ENCODE measurements at regions of chr3 and their contacts with region 1.

Region 1: GRCh38 chr3:132416807-132417694 is at the start of gene DNAJC13:
- DNase-seq: peak; percentile 90
- H3K4me3 Mint-ChIP-seq: peak within 1 kb of the TSS; percentile 100
- H3K27ac Mint-ChIP-seq: peak within 1 kb of the TSS; percentile 98
- H3K4me1 Mint-ChIP-seq: peaks cover 31% of the 10 kb centered on the region
- H3K27me3 Mint-ChIP-seq: no peaks in the 10 kb centered on the region
- total RNA-seq, gene DNAJC13: 30.2 and 34.0 TPM in 2 replicates

Region 2: DNA sequence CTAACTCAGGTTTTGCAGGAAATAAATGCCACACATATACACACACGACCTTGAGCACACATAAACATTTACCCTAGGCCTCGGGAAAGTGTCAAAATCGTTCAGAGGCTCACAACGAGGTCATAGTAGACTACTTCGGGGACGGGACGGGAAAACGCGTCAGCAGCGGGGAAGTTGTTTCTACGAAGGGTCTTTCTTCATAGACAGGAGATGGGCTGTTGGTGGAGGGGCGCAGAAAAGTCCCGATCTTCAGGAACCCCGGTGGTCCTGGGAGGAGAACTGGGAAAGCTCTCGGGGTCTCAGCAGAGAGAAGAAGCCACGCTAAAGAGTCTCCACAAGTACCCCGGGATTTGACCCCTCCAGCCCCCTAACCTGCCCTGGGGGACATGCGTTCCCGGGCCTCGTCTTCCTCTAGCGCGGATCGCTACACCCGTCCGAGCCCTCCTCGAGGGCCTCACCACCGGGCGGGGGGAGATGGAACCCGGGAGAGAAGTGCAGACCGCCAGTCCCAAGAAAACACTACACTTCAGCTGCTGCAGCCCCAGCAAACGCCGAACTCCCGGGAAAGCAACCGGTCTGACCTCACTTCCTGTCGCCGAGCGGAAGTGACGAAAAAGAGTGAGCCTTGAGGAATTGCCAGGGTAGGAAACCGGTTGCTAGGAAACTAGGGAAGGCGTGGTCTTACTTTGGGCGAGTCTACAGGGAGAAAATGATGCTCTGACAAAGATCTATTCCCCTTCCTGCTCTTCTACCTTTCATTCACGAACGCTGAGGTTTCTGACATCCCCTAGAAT is 1670.6 kb before region 1 on chr3 and contains the start of gene PIK3R4:
- intact Hi-C with region 1: loop called (anchors 1 kb)
- DNase-seq: peak; percentile 94
- H3K4me3 Mint-ChIP-seq: peak within 1 kb of the TSS; percentile 90
- H3K27ac Mint-ChIP-seq: peak within 1 kb of the TSS; percentile 97
- H3K4me1 Mint-ChIP-seq: peaks cover 42% of the 10 kb centered on the region
- H3K27me3 Mint-ChIP-seq: no peaks in the 10 kb centered on the region
- total RNA-seq, gene PIK3R4: 33.1 and 35.4 TPM in 2 replicates

Region 3: GRCh38 chr3:131502530-131503245 is 914.4 kb before region 1 on chr3 and contains the start of gene MRPL3:
- intact Hi-C with region 1: loop called (anchors 5 kb)
- DNase-seq: peak; percentile 78
- H3K4me3 Mint-ChIP-seq: peak within 1 kb of the TSS; percentile 100
- H3K27ac Mint-ChIP-seq: peak within 1 kb of the TSS; percentile 95
- H3K4me1 Mint-ChIP-seq: peaks cover 50% of the 10 kb centered on the region
- H3K27me3 Mint-ChIP-seq: peaks cover 4% of the 10 kb centered on the region
- total RNA-seq, gene MRPL3: 166 and 175 TPM in 2 replicates

Region 4: GRCh38 chr3:132535575-132536441 is 118.8 kb after region 1 on chr3:
- intact Hi-C with region 1: loop called (anchors 1 kb)
- DNase-seq: peak; percentile 17
- H3K4me3 Mint-ChIP-seq: no peak overlapping the region
- H3K27ac Mint-ChIP-seq: peak overlapping the region; percentile 86
- H3K4me1 Mint-ChIP-seq: peaks cover 22% of the 10 kb centered on the region
- H3K27me3 Mint-ChIP-seq: no peaks in the 10 kb centered on the region

Region 5: DNA sequence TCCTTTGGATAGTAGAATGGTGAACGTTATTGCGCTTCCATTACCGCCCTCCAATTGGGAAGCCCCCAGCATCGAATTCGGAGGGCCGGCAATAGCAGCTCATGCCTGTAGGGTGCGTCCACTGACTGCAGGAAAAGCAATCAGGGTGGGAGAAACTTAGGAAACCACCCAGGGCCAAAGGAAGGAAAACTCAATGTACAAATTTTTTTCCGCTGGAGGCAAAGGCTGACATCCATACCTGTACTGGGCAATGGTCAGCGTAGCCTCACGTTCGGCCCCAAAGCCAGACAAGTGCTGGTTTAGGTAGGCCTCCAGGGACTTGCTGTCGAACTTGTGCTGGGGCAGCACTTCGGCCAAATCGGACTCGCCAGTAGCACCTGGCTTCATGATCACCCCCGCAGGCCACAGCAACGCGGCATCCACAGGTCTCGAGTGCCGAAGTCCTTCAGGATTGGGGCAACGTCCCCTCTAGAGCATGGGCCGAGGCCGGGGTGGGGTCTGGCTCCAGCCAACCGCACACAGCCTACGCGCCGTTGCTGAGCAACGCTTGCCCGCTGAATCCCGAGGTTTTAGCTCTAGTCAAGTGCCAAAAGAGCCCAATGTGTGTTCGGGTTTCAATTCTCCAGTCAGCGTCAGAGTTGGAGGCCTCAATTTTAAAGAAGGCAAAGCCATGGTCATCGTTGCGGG is 242.5 kb after region 1 on chr3 and contains the start of gene ACAD11:
- intact Hi-C with region 1: loop called (anchors 1 kb)
- DNase-seq: peak; percentile 24
- H3K4me3 Mint-ChIP-seq: peak within 1 kb of the TSS; percentile 97
- H3K27ac Mint-ChIP-seq: peak within 1 kb of the TSS; percentile 98
- H3K4me1 Mint-ChIP-seq: peaks cover 44% of the 10 kb centered on the region
- H3K27me3 Mint-ChIP-seq: no peaks in the 10 kb centered on the region
- total RNA-seq, gene ACAD11: 14.1 and 14.3 TPM in 2 replicates

Region 6: DNA sequence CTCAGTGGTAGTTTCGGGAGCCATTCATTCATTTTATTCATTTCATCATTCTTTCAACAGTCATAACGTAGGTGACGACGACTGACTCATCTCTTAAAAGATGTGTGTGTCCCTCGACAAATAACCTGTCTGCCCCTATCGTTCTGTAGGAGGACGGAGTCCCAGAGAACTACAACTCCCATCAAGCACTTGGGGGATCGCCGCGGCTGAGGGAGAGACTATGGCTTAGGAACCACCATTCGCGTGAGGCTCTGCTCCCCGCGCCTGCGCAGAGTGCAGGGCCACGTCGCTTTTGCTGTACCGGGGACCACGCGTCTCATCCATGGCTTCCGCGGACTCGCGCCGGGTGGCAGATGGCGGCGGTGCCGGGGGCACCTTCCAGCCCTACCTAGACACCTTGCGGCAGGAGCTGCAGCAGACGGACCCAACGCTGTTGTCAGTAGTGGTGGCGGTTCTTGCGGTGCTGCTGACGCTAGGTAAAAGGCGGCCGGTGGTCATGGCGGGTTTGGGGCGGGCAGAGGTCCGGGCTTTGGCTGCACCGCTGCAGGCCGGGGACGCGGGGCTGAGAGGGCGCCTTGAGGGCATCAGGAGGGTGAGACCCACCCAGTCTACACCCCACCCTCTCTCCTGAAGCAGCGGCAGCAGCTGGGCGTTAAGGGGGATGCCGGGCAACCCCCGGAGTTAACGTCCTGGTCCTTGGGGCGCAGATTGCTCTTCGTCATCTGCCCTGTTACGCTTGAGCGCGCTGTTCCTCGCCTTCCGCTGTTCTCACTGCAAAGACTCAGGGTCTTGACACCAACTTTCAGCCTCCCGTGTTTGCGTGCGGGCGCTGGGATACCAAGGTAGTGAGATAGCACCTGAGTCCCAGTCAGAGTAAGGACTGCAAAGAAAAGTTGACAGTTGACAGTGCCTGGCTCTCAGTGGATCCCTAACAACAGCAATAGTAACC is 1388.8 kb after region 1 on chr3 and contains the start of gene SRPRB:
- intact Hi-C with region 1: loop called (anchors 1 kb)
- DNase-seq: peak; percentile 95
- H3K4me3 Mint-ChIP-seq: peak within 1 kb of the TSS; percentile 99
- H3K27ac Mint-ChIP-seq: peak within 1 kb of the TSS; percentile 95
- H3K4me1 Mint-ChIP-seq: peaks cover 28% of the 10 kb centered on the region
- H3K27me3 Mint-ChIP-seq: peaks cover 7% of the 10 kb centered on the region
- total RNA-seq, gene SRPRB: 108 and 115 TPM in 2 replicates

Measured in activated T-helper 1 cell treated with anti-CD3 and anti-CD28 coated beads, Interleukin-12 subunit alpha, Interleukin-12 subunit beta, Interleukin-2, Interleukin-4 antibody, amounts not matched to agents 30 ng/mL and 10 ng/mL and 1 ng/mL, durations not matched to agents 14 hours and 24 hours and 36 hours (primary cell).